Vagina (tissue), 2 donors: ENCODE measurements at regions of chr5 and their contacts with region 1.

Region 1: DNA sequence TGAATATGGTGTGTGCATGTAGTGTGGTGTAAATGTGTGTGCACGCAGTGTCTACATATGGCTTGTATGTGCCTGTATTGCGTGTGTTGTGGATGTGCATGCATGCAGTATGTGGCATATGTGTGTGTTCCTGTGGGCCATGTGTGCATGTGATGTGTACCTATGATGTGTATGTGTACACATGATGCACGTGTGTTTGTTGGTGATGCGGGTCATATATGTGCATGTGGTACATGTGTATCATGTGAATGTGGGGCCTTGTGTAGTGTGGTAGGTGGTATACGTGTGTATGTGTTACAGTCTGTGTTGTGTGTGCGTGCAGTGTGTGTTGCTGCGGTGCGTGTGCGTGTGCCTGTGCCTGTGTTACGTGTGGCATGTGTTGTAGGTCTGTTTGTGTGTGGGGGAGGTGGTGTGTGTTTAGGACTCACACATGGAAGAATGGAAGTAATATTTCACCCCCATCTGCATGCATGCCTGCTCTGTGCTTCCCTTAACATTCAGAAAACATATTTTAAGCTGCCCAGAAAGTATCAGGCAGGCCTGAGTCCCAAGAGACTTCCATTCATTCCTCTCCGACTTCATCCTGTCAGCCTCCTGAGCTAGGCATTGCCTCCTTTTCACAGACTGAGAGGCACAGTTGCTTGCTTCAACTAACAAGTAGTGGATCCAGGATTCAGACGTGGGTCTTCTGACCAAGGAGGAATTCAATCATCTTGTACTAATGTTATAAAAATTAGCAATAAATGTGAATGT is 55.4 kb upstream of the RUFY1 start:
- DNase-seq: no peak
- H3K4me3 ChIP-seq: no peak overlapping the region
- H3K27ac ChIP-seq: no peak overlapping the region
- H3K4me1 ChIP-seq: no peaks in the 10 kb centered on the region
- H3K27me3 ChIP-seq: no peaks in the 10 kb centered on the region
- CTCF ChIP-seq: no peak
- POLR2A ChIP-seq: no peak

Region 2: DNA sequence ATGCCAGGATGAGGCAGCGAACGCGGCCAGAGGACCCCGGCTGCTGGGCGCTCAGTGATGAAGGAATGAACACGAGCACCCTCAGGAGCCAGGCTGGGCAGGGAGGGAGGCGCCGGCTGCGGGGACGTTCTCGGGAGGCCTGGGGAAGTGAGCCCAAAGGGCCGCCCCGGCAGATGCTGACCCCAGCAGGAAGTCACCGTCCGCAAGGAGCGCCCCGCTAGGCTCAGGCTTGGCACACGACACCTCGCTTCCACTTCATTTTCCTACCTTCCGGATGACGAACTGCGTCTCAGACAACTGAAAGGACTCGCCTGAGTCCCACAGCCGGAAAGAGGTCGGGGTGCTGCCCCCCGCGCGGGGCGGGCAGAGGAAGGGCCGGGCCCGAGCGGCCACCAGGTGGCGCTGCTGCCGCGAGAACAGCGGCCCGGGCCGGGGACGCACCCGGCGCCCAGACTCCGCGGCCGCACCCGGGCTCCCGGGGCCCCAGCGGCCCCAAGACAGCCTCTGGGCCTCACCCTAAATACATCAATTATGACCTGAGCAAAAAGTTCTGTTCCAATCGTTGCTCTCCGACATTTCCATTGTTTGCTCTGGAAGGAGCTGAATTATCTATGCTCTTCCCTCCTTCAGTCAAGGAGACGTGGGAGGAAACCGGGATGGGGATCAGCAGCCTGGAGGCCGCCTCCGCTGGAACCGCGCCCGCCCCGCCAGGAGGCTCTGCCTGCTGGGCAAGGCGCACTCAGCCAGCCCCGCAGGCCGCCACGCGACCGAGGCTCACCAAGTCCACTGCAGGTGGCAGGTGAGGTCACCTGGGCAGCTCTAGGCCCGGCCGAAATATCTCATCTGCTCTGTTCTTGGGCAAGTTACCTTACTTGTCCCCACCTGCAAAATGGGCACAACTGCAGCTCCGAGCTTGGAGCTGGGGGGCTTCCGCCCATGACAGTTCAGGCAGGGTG is 327.8 kb before region 1 on chr5:
- intact Hi-C with region 1: loop called (anchors 5 kb)
- DNase-seq: no peak
- H3K4me3 ChIP-seq: peak overlapping the region in 1 of 2 donors; percentile 30
- H3K27ac ChIP-seq: peak overlapping the region; percentile 57
- H3K4me1 ChIP-seq: peaks cover 13% of the 10 kb centered on the region
- H3K27me3 ChIP-seq: no peaks in the 10 kb centered on the region
- CTCF ChIP-seq: peak; percentile 63 to 100 (median 85)
- POLR2A ChIP-seq: no peak

Region 3: GRCh38 chr5:179462040-179462439 is 32.9 kb before region 1 on chr5:
- intact Hi-C with region 1: no loop called
- DNase-seq: no peak
- H3K4me3 ChIP-seq: no peak overlapping the region
- H3K27ac ChIP-seq: no peak overlapping the region
- H3K4me1 ChIP-seq: no peaks in the 10 kb centered on the region
- H3K27me3 ChIP-seq: no peaks in the 10 kb centered on the region
- CTCF ChIP-seq: no peak
- POLR2A ChIP-seq: no peak

Region 4: DNA sequence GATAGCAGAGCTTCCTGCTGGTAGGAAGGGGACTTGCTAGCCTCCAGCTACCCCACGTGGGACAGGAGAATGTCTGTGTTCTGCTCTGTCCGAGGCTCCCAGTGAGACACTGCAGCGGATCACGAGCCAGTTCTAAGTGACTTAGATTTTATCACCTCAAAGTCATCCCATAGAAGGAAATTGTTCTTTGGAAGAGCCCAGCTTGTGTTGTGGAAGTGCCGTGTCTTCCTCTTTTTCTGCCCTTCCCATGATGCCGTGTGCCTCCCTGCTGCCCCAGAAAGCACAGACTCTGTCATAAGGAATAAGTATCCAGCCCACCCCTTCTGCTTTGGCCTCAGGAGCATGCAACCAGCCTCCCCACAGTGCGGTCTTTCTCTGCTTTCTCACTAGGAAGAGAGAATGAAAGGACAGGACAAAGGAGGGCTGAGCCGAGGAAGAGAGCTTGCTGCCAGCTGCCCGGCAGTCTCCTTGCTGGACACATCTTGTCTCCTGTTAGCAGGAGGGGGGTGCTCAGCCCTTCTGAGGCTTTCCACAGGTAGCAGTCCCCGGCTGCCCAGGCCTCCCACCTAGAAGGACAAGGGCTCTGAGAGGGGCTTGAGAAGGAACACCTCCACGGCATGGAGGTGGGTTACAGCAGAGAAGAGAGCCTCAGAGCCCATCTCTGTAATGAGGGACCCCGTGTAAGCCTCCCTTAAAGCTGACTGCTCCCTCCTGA is 91.1 kb after region 1 on chr5:
- intact Hi-C with region 1: no loop called
- DNase-seq: no peak
- H3K4me3 ChIP-seq: no peak overlapping the region
- H3K27ac ChIP-seq: no peak overlapping the region
- H3K4me1 ChIP-seq: no peaks in the 10 kb centered on the region
- H3K27me3 ChIP-seq: no peaks in the 10 kb centered on the region
- CTCF ChIP-seq: no peak
- POLR2A ChIP-seq: no peak